ENCODE measurements at regions of chr17 and their contacts with region 1.

Region 1: DNA sequence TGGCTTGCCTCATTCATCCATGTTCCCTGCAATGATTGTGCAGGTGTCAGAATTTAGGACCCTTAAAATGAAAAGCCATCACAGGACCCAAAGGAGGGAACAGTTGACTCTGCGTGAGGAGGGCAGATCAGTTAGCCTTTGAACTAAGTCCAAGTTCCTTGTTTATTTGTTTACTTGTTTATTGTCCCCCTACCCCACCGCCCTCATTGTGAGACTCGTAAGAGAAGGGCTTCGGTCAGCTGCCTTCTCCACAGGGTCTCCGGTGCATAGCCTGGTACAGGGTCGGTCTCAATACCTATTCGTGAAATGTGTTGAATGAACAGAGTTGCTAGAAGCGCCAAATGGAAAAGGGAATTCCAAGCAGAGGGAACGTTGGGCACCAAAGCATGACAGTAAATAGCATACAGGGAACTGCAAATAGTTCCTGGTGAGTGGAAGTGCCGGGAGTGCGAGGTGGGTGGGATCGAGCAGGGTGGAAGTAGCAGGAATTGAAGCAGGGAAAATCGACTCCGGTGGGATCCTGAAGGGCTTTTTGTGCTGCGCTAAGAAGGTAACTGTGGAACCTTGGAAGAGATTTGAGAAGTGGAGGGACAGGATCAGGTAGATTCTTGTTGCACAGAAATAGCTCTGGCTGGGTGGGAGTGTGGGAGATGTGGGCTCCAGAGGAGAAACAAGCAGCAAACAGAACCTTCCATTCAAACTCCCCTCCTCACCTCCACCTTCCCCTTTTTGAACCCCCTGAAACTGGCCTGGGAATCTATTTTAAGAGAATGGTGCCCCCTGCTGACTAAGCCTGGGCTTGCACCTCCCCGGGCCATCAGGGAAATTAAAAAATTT is 12.7 kb downstream of the SLC35B1 start:
- DNase-seq: peak; percentile 57
- H3K4me3 Mint-ChIP-seq: no peak overlapping the region
- H3K27ac Mint-ChIP-seq: peak overlapping the region; percentile 90
- H3K4me1 Mint-ChIP-seq: peaks cover 22% of the 10 kb centered on the region
- H3K27me3 Mint-ChIP-seq: no peaks in the 10 kb centered on the region

Region 2: DNA sequence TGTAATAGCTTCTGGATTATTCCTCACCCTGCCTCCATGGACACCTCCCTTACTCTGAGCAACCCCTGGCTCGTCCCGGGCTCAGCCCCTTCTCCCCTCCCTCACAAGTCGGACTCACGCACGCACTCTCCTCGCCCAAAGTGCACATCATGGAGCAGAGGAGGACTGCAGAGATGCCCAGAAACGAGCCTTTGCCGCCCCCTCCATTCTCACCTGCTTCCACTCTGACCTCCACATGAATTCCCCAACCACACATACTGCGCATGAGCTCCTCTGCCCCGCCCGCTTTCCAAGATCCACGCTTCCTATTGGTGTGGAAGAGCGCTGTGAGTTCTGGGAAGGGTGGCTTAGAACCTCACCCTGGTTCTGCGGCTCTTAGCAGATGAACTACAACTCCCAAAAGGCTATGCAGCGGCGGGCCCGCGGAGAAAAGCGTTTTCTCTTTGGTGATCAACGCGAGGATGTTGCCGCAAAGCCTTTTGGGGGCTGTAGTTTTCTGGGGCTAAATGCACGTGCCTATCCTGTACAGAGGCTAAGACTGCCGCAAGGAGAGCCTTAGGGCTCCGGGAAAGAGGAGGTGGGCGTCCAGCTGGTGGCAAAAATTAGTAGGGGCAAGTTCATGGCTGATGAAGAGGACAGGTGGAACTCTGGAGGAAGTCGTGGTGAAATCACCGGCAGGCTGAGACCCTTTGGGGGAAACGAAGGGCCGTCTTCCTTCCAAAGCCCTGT is 280.3 kb before region 1 on chr17 and contains the start of gene PHB1:
- intact Hi-C with region 1: loop called (anchors 2 kb)
- DNase-seq: peak; percentile 93
- H3K4me3 Mint-ChIP-seq: peak within 1 kb of the TSS; percentile 98
- H3K27ac Mint-ChIP-seq: peak within 1 kb of the TSS; percentile 95
- H3K4me1 Mint-ChIP-seq: peaks cover 9% of the 10 kb centered on the region
- H3K27me3 Mint-ChIP-seq: peaks cover 3% of the 10 kb centered on the region
- total RNA-seq, gene PHB1: 395 and 401 TPM in 2 replicates

Region 3: DNA sequence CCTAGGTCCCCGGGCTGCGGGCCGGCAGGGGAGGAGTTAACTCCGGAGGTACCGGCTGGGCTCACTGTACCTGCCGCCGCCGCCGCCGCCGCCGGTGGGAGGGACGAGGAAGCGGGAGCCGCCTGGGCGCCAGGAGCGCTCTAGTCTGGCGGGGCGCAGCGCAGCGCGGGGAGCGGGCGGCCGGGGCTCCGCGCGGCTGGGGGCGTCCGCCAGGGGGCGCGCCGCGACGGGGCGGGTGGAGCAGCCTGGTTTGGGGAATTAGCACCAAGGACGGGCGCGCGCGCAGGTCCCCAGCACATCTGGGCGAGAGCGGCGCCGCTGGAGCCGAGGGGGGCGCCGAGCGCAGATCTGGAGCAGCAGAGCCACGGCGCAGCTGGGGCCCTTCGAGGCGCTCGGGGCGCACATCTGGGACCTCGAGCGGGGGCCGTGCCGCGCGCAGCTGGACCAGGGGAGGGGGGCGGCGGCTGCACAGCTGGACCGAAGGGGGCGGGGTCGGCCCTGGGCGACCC is 119.4 kb before region 1 on chr17 and contains the start of gene NXPH3:
- intact Hi-C with region 1: loop called (anchors 1 kb)
- DNase-seq: peak; percentile 66
- H3K4me3 Mint-ChIP-seq: peak within 1 kb of the TSS; percentile 64
- H3K27ac Mint-ChIP-seq: no peak within 1 kb of the TSS
- H3K4me1 Mint-ChIP-seq: peaks cover 16% of the 10 kb centered on the region
- H3K27me3 Mint-ChIP-seq: peaks cover 63% of the 10 kb centered on the region
- total RNA-seq, gene NXPH3: not detected in 2 replicates

Region 4: DNA sequence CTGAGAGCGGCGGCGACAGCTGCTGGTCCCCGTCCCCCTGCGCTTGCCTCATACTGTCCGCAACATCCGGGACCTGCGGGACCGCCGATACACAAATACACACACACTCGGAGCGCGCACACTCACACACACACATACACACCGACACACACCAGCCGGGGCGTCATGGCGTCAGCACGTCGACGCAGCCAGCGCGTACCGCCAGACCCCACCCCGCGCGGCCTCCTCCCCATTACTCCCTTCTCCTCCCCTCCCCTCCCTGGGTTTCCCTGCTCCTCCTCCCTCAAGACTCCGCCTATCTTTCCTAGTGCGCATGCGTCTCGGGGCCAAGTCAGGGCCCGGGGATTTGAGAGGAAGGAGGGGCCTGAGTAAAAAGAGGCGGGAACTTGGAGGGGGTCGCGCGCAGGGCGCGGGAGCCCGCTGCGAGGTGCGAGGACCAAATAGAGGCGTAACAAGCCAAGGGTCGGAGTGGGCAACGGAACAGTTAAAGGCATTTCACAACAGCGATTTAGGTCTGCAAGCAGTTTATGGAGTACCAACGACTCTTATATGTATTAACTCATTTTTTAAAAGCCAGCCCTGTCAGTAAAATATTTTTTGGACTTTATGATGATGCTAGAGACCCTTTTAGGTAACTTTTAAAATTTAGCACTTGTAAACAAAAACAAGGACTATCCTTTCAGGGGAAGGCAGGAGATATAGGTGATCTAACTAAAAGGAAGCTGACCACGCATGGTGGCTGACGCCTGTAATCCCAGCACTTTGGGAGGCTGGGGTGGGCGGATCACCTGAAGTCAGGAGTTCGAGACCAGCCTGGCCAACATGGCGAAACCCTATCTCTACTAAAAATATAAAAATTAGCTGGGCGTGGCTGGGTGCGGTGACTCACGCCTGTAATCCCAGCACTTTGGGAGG is 16.9 kb before region 1 on chr17 and contains the start of gene SPOP:
- intact Hi-C with region 1: loop called (anchors 1 kb)
- DNase-seq: peak; percentile 99
- H3K4me3 Mint-ChIP-seq: peak within 1 kb of the TSS; percentile 91
- H3K27ac Mint-ChIP-seq: peak within 1 kb of the TSS; percentile 99
- H3K4me1 Mint-ChIP-seq: peaks cover 41% of the 10 kb centered on the region
- H3K27me3 Mint-ChIP-seq: peaks cover 5% of the 10 kb centered on the region
- total RNA-seq, gene SPOP: 58.3 and 61.9 TPM in 2 replicates

Region 5: GRCh38 chr17:49788478-49789242 is 93.6 kb after region 1 on chr17 and contains the start of gene KAT7:
- intact Hi-C with region 1: loop called (anchors 1 kb)
- DNase-seq: peak; percentile 99
- H3K4me3 Mint-ChIP-seq: peak within 1 kb of the TSS; percentile 94
- H3K27ac Mint-ChIP-seq: peak within 1 kb of the TSS; percentile 99
- H3K4me1 Mint-ChIP-seq: peaks cover 35% of the 10 kb centered on the region
- H3K27me3 Mint-ChIP-seq: no peaks in the 10 kb centered on the region
- total RNA-seq, gene KAT7: 68.5 and 71.1 TPM in 2 replicates

Region 6: GRCh38 chr17:49914084-49914465 is 219.0 kb after region 1 on chr17:
- intact Hi-C with region 1: no loop called
- DNase-seq: no peak
- H3K4me3 Mint-ChIP-seq: no peak overlapping the region
- H3K27ac Mint-ChIP-seq: no peak overlapping the region
- H3K4me1 Mint-ChIP-seq: no peaks in the 10 kb centered on the region
- H3K27me3 Mint-ChIP-seq: peaks cover 38% of the 10 kb centered on the region

Measured in activated T-helper 1 cell treated with anti-CD3 and anti-CD28 coated beads, Interleukin-12 subunit alpha, Interleukin-12 subunit beta, Interleukin-2, Interleukin-4 antibody, amounts not matched to agents 30 ng/mL and 10 ng/mL and 1 ng/mL, durations not matched to agents 14 hours and 24 hours and 36 hours (primary cell).